Heart right ventricle (tissue), 16 donors: ENCODE measurements at regions of chr2 and their contacts with region 1.

Region 1: DNA sequence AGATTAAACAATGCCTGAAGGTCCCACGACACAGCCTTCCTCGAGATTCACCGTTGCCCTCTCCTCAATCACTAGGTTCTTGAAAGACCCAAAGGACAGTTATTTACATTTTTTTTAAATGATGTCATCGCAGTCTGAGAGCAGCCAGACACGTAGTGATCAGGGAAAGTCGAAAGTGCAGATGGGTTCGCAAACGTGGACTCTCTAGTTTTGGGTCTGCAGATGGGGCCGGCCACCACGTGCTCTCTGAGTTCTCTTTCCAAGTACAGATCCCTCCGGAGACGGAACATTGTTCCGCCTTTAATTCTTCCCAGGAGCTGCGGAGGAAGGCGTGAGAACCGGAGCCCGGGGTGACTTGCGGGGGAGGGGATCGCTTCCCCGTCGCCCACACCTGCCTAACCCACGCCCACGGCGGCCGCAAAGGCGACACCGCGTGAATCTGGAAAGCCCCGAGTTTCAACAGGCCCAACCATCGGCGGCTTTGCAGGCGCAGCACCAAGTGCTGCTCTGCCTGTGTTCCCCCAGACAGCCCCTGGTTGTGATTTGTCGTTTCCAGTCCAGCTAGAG is 54.3 kb downstream of the PKDCC start:
- DNase-seq: peak; percentile 57 to 76
- ATAC-seq: peak; percentile 41 to 83 (median 73)
- H3K4me3 ChIP-seq: peak overlapping the region in 9 of 10 donors; percentile 26 to 57 (median 49)
- H3K27ac ChIP-seq: peak overlapping the region; percentile 74 to 93 (median 88)
- H3K4me1 ChIP-seq: peaks cover 12 to 97% (median 37%) of the 10 kb centered on the region in 9 donors
- H3K27me3 ChIP-seq: no peaks in the 10 kb centered on the region
- CTCF ChIP-seq: no peak

Region 2: GRCh38 chr2:41966431-41966893 is 135.6 kb before region 1 on chr2:
- intact Hi-C with region 1: no loop called
- DNase-seq: peak; percentile 82 to 85
- ATAC-seq: peak; percentile 76 to 86 (median 83)
- H3K4me3 ChIP-seq: no peak overlapping the region
- H3K27ac ChIP-seq: peak overlapping the region; percentile 69 to 82 (median 77)
- H3K4me1 ChIP-seq: peaks cover 0 to 59% (median 36%) of the 10 kb centered on the region in 9 donors
- H3K27me3 ChIP-seq: no peaks in the 10 kb centered on the region
- CTCF ChIP-seq: no peak

Region 3: GRCh38 chr2:42132966-42133641 is 31.0 kb after region 1 on chr2:
- intact Hi-C with region 1: loop called in 3 of 10 experiments (anchors 2 to 5 kb)
- DNase-seq: peak; percentile 71 to 83
- ATAC-seq: peak; percentile 87 to 96 (median 92)
- H3K4me3 ChIP-seq: peak overlapping the region in 7 of 10 donors; percentile 13 to 29 (median 20)
- H3K27ac ChIP-seq: peak overlapping the region in 7 of 10 donors; percentile 53 to 88 (median 65)
- H3K4me1 ChIP-seq: peaks cover 5 to 81% (median 46%) of the 10 kb centered on the region in 9 donors
- H3K27me3 ChIP-seq: peaks cover 0 to 9% (median 0%) of the 10 kb centered on the region in 7 donors
- CTCF ChIP-seq: no peak

Region 4: GRCh38 chr2:42138163-42139016 is 36.3 kb after region 1 on chr2:
- intact Hi-C with region 1: loop called in 3 of 10 experiments (anchors 2 to 5 kb)
- DNase-seq: peak in 1 of 2 donors; percentile 69
- ATAC-seq: peak in 1 of 8 donors; percentile 25
- H3K4me3 ChIP-seq: no peak overlapping the region
- H3K27ac ChIP-seq: peak overlapping the region in 6 of 10 donors; percentile 2 to 92 (median 34)
- H3K4me1 ChIP-seq: peaks cover 19 to 93% (median 76%) of the 10 kb centered on the region in 9 donors
- H3K27me3 ChIP-seq: no peaks in the 10 kb centered on the region
- CTCF ChIP-seq: no peak

Region 5: DNA sequence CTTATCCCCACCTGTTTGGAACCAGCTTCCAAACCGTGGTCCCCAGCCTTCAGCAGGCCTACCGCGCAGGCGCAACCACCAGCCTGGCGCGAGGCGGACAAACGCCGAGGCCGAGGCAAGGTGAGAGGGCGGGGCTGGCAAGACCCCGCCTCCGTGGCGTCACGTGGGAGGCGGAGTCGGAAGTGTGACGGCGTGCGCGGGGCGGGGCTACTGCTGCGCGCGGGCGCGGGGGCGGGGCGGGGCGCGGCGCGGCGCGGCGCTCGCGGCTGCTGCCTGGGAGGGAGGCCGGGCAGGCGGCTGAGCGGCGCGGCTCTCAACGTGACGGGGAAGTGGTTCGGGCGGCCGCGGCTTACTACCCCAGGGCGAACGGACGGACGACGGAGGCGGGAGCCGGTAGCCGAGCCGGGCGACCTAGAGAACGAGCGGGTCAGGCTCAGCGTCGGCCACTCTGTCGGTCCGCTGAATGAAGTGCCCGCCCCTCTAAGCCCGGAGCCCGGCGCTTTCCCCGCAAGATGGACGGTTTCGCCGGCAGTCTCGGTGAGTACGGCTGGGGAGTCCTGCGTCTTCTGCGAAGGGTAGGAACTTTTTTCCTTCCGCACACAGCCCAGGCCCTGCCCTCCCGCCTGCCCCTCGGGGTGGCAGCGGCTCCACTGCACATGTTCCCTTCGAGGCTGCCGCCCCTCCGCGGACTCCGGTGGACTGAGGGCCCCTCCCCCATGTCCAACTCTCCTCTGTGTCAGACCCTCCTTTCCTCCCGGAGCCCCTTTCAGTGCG is 67.2 kb after region 1 on chr2 and contains the start of gene EML4:
- intact Hi-C with region 1: loop called in 1 of 10 experiments (anchors 10 kb)
- DNase-seq: peak; percentile 90 to 94
- ATAC-seq: peak; percentile 95 to 99 (median 97)
- H3K4me3 ChIP-seq: peak within 1 kb of the TSS; percentile 75 to 98 (median 90)
- H3K27ac ChIP-seq: peak within 1 kb of the TSS; percentile 63 to 97 (median 87)
- H3K4me1 ChIP-seq: peaks cover 0 to 44% (median 28%) of the 10 kb centered on the region in 9 donors
- H3K27me3 ChIP-seq: no peaks in the 10 kb centered on the region
- CTCF ChIP-seq: peak in 2 of 9 donors; percentile 4 to 8
- total RNA-seq, gene EML4: 4.5 to 17.2 (median 5.9) TPM

Region 6: DNA sequence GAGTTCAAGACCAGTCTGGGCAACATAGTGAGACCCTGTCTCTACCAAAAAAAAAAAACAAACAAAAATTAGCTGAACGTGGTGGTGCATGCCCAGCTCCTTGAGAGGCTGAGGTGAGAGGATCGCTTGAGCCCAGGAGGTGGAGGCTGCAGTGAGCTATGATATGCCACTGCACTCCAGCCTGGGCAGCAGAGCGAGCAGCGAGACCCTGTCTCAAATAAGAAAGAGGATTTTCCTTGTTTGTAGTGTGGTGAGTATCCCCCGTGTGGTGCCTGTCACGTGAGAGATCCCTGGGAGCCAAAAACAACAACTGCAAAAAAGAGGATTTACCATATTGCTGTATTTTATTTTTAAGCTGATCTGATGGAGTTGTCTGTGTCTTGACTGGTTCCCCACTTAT is 76.2 kb after region 1 on chr2:
- intact Hi-C with region 1: loop called in 2 of 10 experiments (anchors 5 to 10 kb)
- DNase-seq: no peak
- ATAC-seq: no peak
- H3K4me3 ChIP-seq: no peak overlapping the region
- H3K27ac ChIP-seq: no peak overlapping the region
- H3K4me1 ChIP-seq: peaks cover 0 to 30% (median 9%) of the 10 kb centered on the region in 9 donors
- H3K27me3 ChIP-seq: no peaks in the 10 kb centered on the region
- CTCF ChIP-seq: no peak

Region 7: DNA sequence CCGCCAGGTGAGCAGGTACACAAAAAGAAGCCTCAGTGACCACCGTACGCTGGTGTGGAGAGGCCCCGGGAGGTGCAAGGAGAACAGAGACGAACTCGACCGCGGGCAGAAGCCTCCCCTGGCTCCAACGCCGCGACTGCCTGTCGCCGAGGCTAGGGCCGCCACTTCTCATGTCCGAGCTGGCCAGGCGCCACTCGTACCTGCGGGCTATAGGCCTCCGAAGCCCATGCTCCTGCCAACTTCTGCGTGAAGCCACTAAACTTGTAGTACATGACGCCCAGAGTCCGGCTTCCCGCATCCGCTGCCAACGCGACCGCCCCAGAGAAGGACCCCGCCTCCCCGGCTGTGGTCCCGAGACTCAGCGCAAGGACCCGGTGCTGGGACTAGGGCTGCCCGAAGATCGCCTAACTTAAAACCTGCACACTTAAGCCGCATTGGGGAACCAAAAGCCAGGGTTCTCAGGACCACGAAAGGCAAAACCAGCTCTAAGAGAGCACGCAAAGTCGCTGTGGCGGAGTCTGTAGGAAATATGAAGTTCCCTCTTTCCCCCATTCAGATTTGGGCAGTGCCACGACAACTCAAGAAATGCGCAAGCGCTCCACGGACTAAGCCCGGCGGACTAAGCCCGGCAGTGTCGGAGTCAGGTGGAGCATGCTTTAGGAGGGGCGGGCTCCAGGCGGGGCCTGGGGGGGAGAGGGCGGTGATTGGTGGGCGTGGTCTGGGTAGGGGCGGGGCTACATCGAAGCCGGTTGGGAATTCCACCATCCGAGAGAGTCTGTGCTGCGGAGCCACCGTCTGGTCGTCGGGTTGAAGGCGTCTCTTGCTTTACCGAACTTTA is 259.0 kb after region 1 on chr2 and contains the start of gene COX7A2L:
- intact Hi-C with region 1: loop called in 7 of 10 experiments (anchors 2 to 10 kb)
- DNase-seq: peak; percentile 97
- ATAC-seq: peak; percentile 99 to 100 (median 100)
- H3K4me3 ChIP-seq: peak within 1 kb of the TSS; percentile 66 to 100 (median 89)
- H3K27ac ChIP-seq: peak within 1 kb of the TSS; percentile 83 to 99 (median 96)
- H3K4me1 ChIP-seq: peaks cover 10 to 38% (median 30%) of the 10 kb centered on the region in 9 donors
- H3K27me3 ChIP-seq: peaks cover 0 to 2% (median 0%) of the 10 kb centered on the region in 7 donors
- CTCF ChIP-seq: peak in 5 of 9 donors; percentile 26 to 65 (median 56)
- total RNA-seq, gene COX7A2L: 93.9 to 141 (median 107) TPM